HCT116 (cell line): ENCODE measurements at regions of chr16 and their contacts with region 1.

Region 1: DNA sequence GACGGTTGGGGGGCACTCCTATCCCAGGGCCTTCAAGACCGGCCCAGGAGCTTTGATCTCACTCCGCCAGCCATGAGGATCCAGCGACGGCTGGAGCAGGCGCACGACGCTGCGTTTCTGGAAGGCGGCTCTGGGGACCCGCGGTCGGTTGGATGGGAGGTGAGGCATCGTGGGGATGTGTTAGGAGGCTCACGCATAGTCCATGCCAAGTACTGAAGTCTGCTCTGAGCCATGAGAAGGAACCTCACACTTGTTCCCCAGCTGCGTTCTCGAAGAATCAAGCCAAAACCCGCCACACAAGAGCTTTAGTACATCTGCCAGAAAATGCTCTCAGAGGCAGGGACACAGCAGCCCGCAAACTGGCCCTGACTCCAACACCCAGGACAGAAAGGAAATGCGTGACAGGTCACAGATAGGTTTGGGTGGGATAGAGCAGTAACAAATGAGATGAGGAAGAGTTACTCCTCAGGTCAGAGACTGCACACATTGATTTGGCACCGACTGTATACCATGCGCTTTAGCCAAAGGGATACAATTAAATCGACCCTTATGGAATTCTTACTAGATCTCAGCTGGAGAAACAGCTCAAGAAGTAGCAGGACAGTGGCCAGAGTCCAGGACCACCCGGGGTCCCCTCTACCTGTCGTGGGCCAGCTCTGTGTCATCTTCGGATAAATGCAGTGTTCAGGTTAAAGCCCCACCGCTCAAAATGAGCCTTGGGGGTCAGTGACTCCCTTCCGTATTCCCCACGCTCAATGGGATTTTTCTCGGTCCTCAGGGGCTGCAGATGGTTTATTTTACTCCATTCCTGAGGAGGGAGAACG is 6.7 kb upstream of the GSG1L start:
- DNase-seq: no peak
- ATAC-seq: peak; percentile 28; the same call in 1 of the 2 replicates
- H3K4me3 ChIP-seq: no peak overlapping the region
- H3K27ac ChIP-seq: no peak overlapping the region
- H3K4me1 ChIP-seq: no peaks in the 10 kb centered on the region
- H3K27me3 ChIP-seq: no peaks in the 10 kb centered on the region
- CTCF ChIP-seq: no peak
- POLR2A ChIP-seq: no peak
- RAD21 ChIP-seq: no peak

Region 2: GRCh38 chr16:27639561-27640276 is 430.5 kb before region 1 on chr16:
- CTCF ChIA-PET with region 1: interaction called, 3 read pairs
- POLR2A ChIA-PET with region 1: no interaction called
- RAD21 ChIA-PET with region 1: no interaction called
- intact Hi-C with region 1: loop called (anchors 5 kb)
- DNase-seq: peak; percentile 21
- ATAC-seq: peak; percentile 90
- H3K4me3 ChIP-seq: no peak overlapping the region
- H3K27ac ChIP-seq: no peak overlapping the region
- H3K4me1 ChIP-seq: peaks cover 0 to 6% of the 10 kb centered on the region in 2 experiments; a peak in 1 of 4 replicates
- H3K27me3 ChIP-seq: no peaks in the 10 kb centered on the region
- CTCF ChIP-seq: peak; percentile 47 to 84 (median 75); a peak in 5 of 6 replicates
- POLR2A ChIP-seq: no peak
- RAD21 ChIP-seq: peak; percentile 67

Region 3: GRCh38 chr16:27690608-27691007 is 379.6 kb before region 1 on chr16:
- CTCF ChIA-PET with region 1: no interaction called
- POLR2A ChIA-PET with region 1: no interaction called
- RAD21 ChIA-PET with region 1: no interaction called
- intact Hi-C with region 1: loop called (anchors 2 kb)
- DNase-seq: peak; percentile 21
- ATAC-seq: peak; percentile 94
- H3K4me3 ChIP-seq: no peak overlapping the region
- H3K27ac ChIP-seq: no peak overlapping the region
- H3K4me1 ChIP-seq: no peaks in the 10 kb centered on the region
- H3K27me3 ChIP-seq: no peaks in the 10 kb centered on the region
- CTCF ChIP-seq: peak; percentile 59 to 85 (median 83); a peak in 5 of 6 replicates
- POLR2A ChIP-seq: no peak
- RAD21 ChIP-seq: peak; percentile 70

Region 4: GRCh38 chr16:27698266-27698665 is 371.9 kb before region 1 on chr16:
- CTCF ChIA-PET with region 1: no interaction called
- POLR2A ChIA-PET with region 1: no interaction called
- RAD21 ChIA-PET with region 1: no interaction called
- intact Hi-C with region 1: loop called (anchors 2 kb)
- DNase-seq: no peak
- ATAC-seq: peak; percentile 83
- H3K4me3 ChIP-seq: no peak overlapping the region
- H3K27ac ChIP-seq: no peak overlapping the region
- H3K4me1 ChIP-seq: no peaks in the 10 kb centered on the region
- H3K27me3 ChIP-seq: no peaks in the 10 kb centered on the region
- CTCF ChIP-seq: peak; percentile 44 to 75 (median 63); a peak in 5 of 6 replicates
- POLR2A ChIP-seq: no peak
- RAD21 ChIP-seq: peak; percentile 51

Region 5: DNA sequence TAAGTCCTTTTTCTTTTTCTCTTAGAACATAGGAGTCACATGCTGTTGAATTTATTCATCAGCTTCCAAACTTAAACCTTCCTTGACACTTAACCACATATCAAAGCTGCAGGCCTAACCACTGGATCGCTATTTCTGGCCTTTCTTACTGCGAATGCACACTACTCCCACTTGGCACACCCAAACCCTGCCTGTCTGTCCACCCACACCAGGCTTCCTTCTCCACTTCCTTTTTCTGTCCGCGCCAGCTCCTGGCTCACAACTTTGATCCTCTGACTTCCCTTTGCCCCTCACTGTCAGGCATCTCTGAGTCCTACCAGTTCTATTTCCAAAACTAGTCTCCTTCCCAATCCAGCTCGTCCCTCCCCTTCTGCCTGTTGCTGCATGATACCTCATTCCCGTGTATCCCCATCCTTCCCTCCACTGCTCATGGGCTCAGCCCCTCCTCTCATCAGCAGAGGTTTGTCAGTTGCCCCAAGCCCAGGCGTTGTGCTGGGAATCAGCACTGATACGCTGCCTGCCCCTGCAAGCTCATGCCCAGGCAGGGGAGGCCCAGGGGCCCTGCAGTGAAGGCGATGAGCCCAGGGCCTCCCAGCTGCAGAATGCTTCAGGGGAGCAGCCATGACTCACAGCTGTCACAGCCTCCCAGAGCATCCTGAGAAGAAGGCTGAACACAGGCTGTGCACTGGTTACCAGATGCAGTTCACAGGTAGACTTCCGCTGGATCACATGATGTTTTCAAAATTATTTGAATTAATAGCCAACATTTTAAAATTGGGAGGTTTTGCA is 340.5 kb before region 1 on chr16:
- CTCF ChIA-PET with region 1: no interaction called
- POLR2A ChIA-PET with region 1: no interaction called
- RAD21 ChIA-PET with region 1: no interaction called
- intact Hi-C with region 1: no loop called
- DNase-seq: no peak
- ATAC-seq: no peak
- H3K4me3 ChIP-seq: no peak overlapping the region
- H3K27ac ChIP-seq: no peak overlapping the region
- H3K4me1 ChIP-seq: no peaks in the 10 kb centered on the region
- H3K27me3 ChIP-seq: no peaks in the 10 kb centered on the region
- CTCF ChIP-seq: no peak
- POLR2A ChIP-seq: no peak
- RAD21 ChIP-seq: no peak

Region 6: GRCh38 chr16:27892881-27893280 is 177.3 kb before region 1 on chr16:
- CTCF ChIA-PET with region 1: interaction called, 9 read pairs
- POLR2A ChIA-PET with region 1: no interaction called
- RAD21 ChIA-PET with region 1: interaction called in 1 of 2 experiments, 3 read pairs
- intact Hi-C with region 1: loop called (anchors 1 kb)
- DNase-seq: peak; percentile 6
- ATAC-seq: peak; percentile 78
- H3K4me3 ChIP-seq: no peak overlapping the region
- H3K27ac ChIP-seq: no peak overlapping the region
- H3K4me1 ChIP-seq: no peaks in the 10 kb centered on the region
- H3K27me3 ChIP-seq: peaks cover 17% of the 10 kb centered on the region
- CTCF ChIP-seq: peak; percentile 27 to 51 (median 45); a peak in 4 of 6 replicates
- POLR2A ChIP-seq: no peak
- RAD21 ChIP-seq: no peak

Region 7: DNA sequence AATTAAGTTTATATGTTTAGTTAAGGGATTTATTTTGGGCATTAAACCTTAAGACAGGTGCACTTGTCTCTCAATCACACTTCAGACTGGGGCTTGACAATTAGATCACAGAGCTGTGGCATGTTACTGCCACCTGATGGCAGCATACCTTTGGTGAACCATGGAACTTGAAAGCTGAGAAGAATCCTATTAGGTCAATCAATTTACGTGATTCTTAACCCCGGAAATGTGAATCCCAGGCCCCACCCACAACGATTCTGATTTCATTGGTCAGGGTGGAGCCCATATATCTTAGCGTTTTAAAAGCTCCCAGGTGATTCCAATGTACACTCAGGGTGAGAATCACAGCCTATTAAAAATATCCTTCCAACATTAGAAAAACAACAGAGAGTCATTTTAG is 97.7 kb before region 1 on chr16:
- CTCF ChIA-PET with region 1: interaction called, 36 read pairs
- POLR2A ChIA-PET with region 1: no interaction called
- RAD21 ChIA-PET with region 1: interaction called, 4 to 7 read pairs
- intact Hi-C with region 1: loop called (anchors 1 kb)
- DNase-seq: peak; percentile 73
- ATAC-seq: peak; percentile 96
- H3K4me3 ChIP-seq: no peak overlapping the region
- H3K27ac ChIP-seq: no peak overlapping the region
- H3K4me1 ChIP-seq: peaks cover 3 to 6% of the 10 kb centered on the region in 2 experiments; a peak in 3 of 4 replicates
- H3K27me3 ChIP-seq: no peaks in the 10 kb centered on the region
- CTCF ChIP-seq: peak; percentile 76 to 85 (median 78)
- POLR2A ChIP-seq: no peak
- RAD21 ChIP-seq: peak; percentile 83

Region 8: GRCh38 chr16:28025631-28026030 is 44.6 kb before region 1 on chr16:
- CTCF ChIA-PET with region 1: no interaction called
- POLR2A ChIA-PET with region 1: no interaction called
- RAD21 ChIA-PET with region 1: no interaction called
- intact Hi-C with region 1: no loop called
- DNase-seq: no peak
- ATAC-seq: no peak
- H3K4me3 ChIP-seq: no peak overlapping the region
- H3K27ac ChIP-seq: no peak overlapping the region
- H3K4me1 ChIP-seq: no peaks in the 10 kb centered on the region
- H3K27me3 ChIP-seq: peaks cover 12% of the 10 kb centered on the region; the same call in 1 of the 2 replicates
- CTCF ChIP-seq: no peak
- POLR2A ChIP-seq: no peak
- RAD21 ChIP-seq: no peak

Region 9: DNA sequence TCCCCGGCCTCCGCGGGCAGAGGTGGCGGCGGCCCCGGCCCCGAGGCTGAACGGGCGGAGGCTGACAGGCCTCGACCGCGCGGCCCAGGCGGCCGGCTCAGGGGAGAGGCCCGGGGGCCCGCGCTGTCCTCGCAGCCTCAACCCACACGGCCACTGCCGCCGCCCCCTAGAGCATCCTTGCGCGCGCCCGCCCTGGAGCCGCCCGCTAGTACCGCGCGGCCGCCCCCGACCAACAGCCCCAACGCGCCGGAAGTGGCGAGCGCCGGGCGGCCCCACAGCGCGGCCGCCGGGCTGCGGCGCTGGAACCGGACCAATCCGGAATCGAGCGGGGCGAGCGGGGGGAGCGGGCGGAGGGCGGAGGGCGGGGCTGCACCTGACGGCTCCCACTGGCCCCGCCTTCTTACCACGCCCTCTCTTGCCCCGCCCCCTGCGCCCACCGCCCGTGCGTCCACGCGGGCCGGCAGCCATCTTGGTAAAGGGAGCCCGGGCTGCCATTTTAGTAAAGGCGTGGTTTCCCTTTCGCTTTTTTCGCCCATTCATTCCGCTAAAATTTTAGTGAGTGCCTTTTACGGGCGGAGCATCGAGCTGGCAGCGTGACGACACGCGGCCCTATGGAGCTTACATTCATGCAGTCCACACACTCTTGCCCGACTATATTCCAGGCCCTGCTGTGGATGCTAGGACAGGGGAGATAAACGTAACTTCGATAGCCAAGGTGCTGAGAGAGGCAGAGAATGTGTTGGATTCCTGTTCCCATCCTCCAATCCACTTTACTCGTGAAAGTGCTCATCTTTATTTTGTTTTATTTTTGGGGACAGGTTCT is 141.7 kb after region 1 on chr16 and contains the start of gene XPO6:
- CTCF ChIA-PET with region 1: no interaction called
- POLR2A ChIA-PET with region 1: no interaction called
- RAD21 ChIA-PET with region 1: no interaction called
- intact Hi-C with region 1: loop called (anchors 10 kb)
- DNase-seq: peak; percentile 80
- ATAC-seq: peak; percentile 89
- H3K4me3 ChIP-seq: peak within 1 kb of the TSS; percentile 89 to 90
- H3K27ac ChIP-seq: peak within 1 kb of the TSS; percentile 86
- H3K4me1 ChIP-seq: peaks cover 17 to 24% of the 10 kb centered on the region in 2 experiments
- H3K27me3 ChIP-seq: no peaks in the 10 kb centered on the region
- CTCF ChIP-seq: no peak
- POLR2A ChIP-seq: no peak
- RAD21 ChIP-seq: no peak
- total RNA-seq, gene XPO6: 162 TPM